SK-N-SH (cell line): ENCODE measurements at regions of chr15 and their contacts with region 1.

Region 1: DNA sequence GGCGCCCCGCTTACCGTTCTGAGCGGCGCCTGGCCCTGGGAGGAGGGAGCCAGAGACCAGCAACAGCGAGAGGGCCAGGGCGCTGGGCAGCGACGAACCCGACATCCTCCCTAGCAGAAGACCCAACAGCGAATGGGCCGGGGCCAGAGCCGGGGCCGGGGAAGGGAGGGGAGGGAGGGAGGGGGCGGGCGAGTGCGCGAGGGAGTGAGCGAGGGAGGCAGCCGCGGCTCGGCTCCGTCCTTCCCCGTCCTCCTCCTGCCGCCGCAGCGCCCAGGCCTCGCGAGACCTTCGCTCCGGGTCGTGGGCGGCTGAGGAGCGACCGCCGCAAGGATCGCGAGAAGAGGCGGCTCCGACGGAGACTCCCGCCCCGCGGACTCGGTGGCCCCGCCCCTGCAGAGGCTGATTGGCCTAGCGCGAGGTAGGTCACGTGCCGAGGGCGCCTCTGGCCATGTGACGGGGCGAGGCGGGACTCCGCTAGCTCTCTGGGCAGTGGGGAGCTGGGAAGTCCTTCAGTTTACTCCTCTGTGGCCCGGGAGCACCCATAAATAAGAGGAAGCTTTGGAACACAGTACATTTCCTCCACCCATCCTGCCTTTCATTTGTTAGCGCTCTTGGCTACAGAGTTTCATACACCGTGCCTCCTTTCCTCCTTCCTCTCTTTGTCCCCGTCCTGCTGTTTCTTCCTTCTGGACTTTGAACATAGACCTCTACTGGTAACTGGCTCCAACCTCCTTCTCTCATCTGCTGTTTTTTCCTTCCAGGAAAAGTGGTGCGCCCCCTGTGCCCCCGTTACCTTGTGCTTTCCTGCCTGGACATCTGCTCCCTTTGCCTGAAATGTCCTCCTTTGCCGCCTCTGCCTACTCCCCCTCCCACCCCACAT is at the start of gene NPTN:
- DNase-seq: peak; percentile 97
- H3K4me3 ChIP-seq: peak within 1 kb of the TSS; percentile 78 to 85
- H3K27ac ChIP-seq: peak within 1 kb of the TSS; percentile 82 to 98
- H3K4me1 ChIP-seq: peaks cover 28 to 29% of the 10 kb centered on the region in 2 experiments
- H3K27me3 ChIP-seq: no peaks in the 10 kb centered on the region
- CTCF ChIP-seq: 0 out of 2 replicates have a peak, but pooled peaks have one; percentile 14
- EP300 ChIP-seq: no peak
- RAD21 ChIP-seq: no peak
- polyA plus RNA-seq, gene NPTN: 177 and 183 TPM in 2 replicates

Region 2: GRCh38 chr15:73305331-73306211 is 327.8 kb before region 1 on chr15:
- CTCF ChIA-PET with region 1: interaction called, 37 read pairs
- POLR2A ChIA-PET with region 1: no interaction called
- DNase-seq: peak; percentile 79
- H3K4me3 ChIP-seq: no peak overlapping the region; a peak in 1 of 4 replicates
- H3K27ac ChIP-seq: no peak overlapping the region; a peak in 1 of 4 replicates
- H3K4me1 ChIP-seq: peaks cover 0 to 8% of the 10 kb centered on the region in 2 experiments; a peak in 1 of 4 replicates
- H3K27me3 ChIP-seq: no peaks in the 10 kb centered on the region
- CTCF ChIP-seq: peak; percentile 62
- EP300 ChIP-seq: no peak
- RAD21 ChIP-seq: peak; percentile 90

Region 3: DNA sequence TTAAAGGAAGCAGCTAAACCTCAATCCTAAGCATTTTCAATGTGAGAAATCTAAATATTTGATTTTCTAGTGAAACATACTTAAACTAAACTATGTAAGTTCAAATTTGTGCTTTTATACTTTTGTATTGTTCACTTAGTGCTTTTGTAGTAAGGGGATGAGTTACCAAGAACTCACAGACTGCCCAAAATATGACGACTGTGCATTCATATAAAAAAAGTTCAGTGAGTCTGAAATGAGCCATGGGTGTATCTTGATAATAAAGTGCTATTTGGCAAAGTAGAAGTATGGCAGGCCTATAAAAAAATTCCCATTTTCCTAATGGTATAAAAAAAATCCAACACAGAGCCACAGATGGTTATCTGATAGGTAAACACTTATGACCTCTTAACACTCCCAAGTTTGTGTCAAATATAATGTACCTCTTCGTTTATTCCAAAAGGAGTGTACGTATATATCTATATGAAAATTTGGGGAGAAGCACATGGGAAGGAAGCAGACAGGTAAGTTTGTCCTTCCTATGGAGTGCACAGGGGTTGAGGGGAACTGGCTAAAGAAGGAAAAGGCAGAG is 66.2 kb before region 1 on chr15:
- CTCF ChIA-PET with region 1: interaction called, 145 read pairs
- POLR2A ChIA-PET with region 1: no interaction called
- DNase-seq: no peak
- H3K4me3 ChIP-seq: no peak overlapping the region
- H3K27ac ChIP-seq: no peak overlapping the region
- H3K4me1 ChIP-seq: peaks cover 0 to 4% of the 10 kb centered on the region in 2 experiments; a peak in 2 of 4 replicates
- H3K27me3 ChIP-seq: no peaks in the 10 kb centered on the region
- CTCF ChIP-seq: no peak
- EP300 ChIP-seq: no peak
- RAD21 ChIP-seq: no peak

Region 4: DNA sequence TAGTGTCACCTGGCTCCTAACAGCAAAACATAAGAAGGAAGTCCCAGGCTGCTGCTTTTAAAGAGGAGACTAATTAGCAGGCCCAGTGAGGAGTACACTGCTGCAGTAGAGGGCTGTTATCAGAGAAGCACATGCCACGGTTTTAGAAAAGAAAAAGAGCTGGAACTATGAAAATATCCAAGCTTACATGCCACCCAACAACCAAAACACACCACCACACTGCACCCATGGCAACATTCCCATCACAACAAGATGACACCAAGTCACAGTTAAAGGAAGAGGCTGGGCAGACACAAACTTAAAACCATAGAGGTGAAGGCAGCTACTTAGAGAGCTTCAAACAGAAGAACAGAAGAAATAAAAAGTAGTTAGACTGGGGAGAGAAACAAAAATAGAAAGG is 37.2 kb before region 1 on chr15:
- CTCF ChIA-PET with region 1: interaction called, 11 read pairs
- POLR2A ChIA-PET with region 1: no interaction called
- DNase-seq: no peak
- H3K4me3 ChIP-seq: no peak overlapping the region
- H3K27ac ChIP-seq: no peak overlapping the region
- H3K4me1 ChIP-seq: peaks cover 20 to 27% of the 10 kb centered on the region in 2 experiments
- H3K27me3 ChIP-seq: no peaks in the 10 kb centered on the region
- CTCF ChIP-seq: no peak
- EP300 ChIP-seq: no peak
- RAD21 ChIP-seq: no peak

Region 5: DNA sequence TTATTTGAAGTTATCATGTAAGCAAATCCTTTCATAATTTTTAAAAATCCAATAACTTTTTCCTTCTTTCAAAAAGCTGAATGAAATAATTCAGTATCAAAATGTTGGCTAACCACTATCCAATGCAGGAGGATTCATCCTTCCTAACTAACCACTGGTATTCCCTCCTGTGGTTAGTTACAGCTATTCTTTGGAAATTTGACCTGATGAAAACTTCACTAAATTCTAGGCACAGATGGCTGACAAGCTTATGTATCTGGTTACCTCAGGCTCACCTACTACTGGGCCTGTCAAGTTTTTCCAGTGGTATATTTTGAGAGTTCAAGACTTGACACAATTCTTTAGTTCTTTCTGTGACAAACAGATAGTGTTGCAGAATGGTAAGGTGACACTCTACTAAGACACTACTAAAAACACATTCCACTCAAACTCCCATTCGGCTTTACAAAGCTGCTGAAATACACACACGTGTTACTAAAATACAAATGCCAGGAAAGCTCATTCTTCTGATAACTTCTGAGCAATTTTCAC is 16.0 kb before region 1 on chr15:
- CTCF ChIA-PET with region 1: interaction called, 14 read pairs
- POLR2A ChIA-PET with region 1: no interaction called
- DNase-seq: no peak
- H3K4me3 ChIP-seq: no peak overlapping the region
- H3K27ac ChIP-seq: no peak overlapping the region
- H3K4me1 ChIP-seq: peaks cover 0 to 6% of the 10 kb centered on the region in 2 experiments; a peak in 3 of 4 replicates
- H3K27me3 ChIP-seq: no peaks in the 10 kb centered on the region
- CTCF ChIP-seq: no peak
- EP300 ChIP-seq: no peak
- RAD21 ChIP-seq: no peak

Region 6: GRCh38 chr15:73677146-73677607 is 43.8 kb after region 1 on chr15:
- CTCF ChIA-PET with region 1: interaction called, 40 read pairs
- POLR2A ChIA-PET with region 1: no interaction called
- DNase-seq: peak; percentile 60
- H3K4me3 ChIP-seq: no peak overlapping the region
- H3K27ac ChIP-seq: no peak overlapping the region
- H3K4me1 ChIP-seq: no peaks in the 10 kb centered on the region
- H3K27me3 ChIP-seq: peaks cover 22% of the 10 kb centered on the region
- CTCF ChIP-seq: peak; percentile 81
- EP300 ChIP-seq: no peak
- RAD21 ChIP-seq: peak; percentile 73

Region 7: DNA sequence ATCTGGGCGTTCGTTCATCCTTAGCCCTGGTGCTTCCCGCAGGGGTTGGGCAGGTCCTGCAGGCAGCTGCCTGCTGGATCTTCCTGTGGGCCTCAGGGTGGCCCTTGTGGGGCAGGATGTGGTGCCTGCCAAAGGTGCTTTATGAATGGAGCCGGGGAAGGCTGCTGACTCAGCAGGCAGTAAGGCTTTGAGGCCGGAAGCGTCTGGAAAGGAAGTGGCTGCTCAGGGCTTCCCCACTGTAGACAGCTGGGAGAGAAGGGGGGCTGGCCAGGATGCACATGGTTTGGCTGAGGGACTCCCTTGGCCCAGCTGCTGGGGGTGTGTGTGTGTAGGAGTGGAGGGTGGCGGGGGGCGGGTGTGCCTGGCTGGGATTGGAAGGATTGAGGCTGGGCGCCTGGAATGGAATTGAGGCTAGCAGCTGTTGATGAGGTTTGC is 63.7 kb after region 1 on chr15:
- CTCF ChIA-PET with region 1: interaction called, 256 read pairs
- POLR2A ChIA-PET with region 1: no interaction called
- DNase-seq: peak; percentile 84
- H3K4me3 ChIP-seq: peak overlapping the region in 1 of 2 experiments; percentile 13; a peak in 1 of 4 replicates
- H3K27ac ChIP-seq: peak overlapping the region; percentile 58 to 69
- H3K4me1 ChIP-seq: peaks cover 9 to 20% of the 10 kb centered on the region in 2 experiments; a peak in 2 of 4 replicates
- H3K27me3 ChIP-seq: no peaks in the 10 kb centered on the region
- CTCF ChIP-seq: no peak
- EP300 ChIP-seq: peak; percentile 35 to 54; a peak in 1 of 4 replicates
- RAD21 ChIP-seq: 0 out of 2 replicates have a peak, but pooled peaks have one; percentile 1